Caco-2 (cell line): ENCODE measurements at regions of chr10 and their contacts with region 1.

Region 1: DNA sequence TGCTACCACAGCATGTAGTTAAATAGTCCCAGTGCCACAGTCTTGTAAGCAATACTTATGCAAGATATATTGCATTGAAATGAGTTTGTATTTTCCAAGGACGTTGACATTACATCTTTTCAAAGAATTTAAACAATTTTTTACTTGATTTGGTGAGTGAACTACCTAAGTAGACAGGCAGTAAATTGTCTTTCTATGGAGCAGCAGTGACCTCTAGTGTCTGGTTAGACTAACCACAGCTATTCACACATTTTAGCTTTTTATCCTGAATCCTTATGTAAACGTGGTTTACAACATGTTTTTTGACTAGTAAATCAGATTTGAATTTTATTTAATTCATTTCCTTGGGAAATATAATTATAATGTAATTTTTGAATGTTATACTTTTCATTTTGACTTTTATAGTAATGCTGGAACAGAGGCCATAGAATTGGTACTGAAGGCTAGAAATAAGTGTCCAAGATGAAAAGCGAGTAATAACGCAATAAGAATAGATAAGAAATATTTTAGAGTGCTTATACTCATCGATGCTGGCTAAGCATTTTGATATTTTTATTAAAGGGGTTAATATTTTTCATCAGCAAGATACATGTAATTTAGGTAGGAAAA is 5.6 kb downstream of the LRRTM3 start:
- DNase-seq: peak in 1 of 2 experiments; percentile 64
- H3K4me3 ChIP-seq: no peak overlapping the region
- H3K4me3 Mint-ChIP-seq: no peak overlapping the region
- H3K27ac Mint-ChIP-seq: no peak overlapping the region
- H3K4me1 ChIP-seq: no peaks in the 10 kb centered on the region
- H3K4me1 Mint-ChIP-seq: no peaks in the 10 kb centered on the region
- H3K27me3 ChIP-seq: no peaks in the 10 kb centered on the region; the same call in 1 of the 2 replicates
- H3K27me3 Mint-ChIP-seq: peaks cover 24% of the 10 kb centered on the region
- CTCF ChIP-seq: peak; percentile 93 to 96

Region 2: GRCh38 chr10:65358565-65358964 is 1572.9 kb before region 1 on chr10:
- CTCF ChIA-PET with region 1: no interaction called
- POLR2A ChIA-PET with region 1: no interaction called
- intact Hi-C with region 1: loop called (anchors 1 kb)
- DNase-seq: peak; percentile 63 to 66
- H3K4me3 ChIP-seq: no peak overlapping the region
- H3K4me3 Mint-ChIP-seq: no peak overlapping the region
- H3K27ac Mint-ChIP-seq: no peak overlapping the region
- H3K4me1 ChIP-seq: no peaks in the 10 kb centered on the region
- H3K4me1 Mint-ChIP-seq: no peaks in the 10 kb centered on the region
- H3K27me3 ChIP-seq: no peaks in the 10 kb centered on the region
- H3K27me3 Mint-ChIP-seq: no peaks in the 10 kb centered on the region
- CTCF ChIP-seq: peak; percentile 84 to 93

Region 3: DNA sequence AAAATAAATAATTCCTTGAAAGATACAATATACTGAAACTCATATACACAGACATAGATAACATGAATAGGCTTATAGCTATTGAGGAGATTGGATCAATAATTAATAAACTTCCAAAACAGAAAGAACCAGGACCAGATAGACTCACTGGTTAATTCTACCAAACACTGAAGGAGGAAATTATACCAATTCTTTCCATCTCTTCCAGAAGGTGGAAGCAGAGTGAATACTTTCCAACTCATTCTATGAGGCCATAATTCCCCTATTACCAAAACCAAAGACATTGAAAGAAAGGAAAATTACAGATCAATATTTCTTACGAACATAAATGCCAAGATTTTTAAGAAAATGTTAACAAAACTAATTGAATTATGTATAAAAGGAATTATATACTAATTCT is 630.4 kb before region 1 on chr10:
- CTCF ChIA-PET with region 1: no interaction called
- POLR2A ChIA-PET with region 1: no interaction called
- intact Hi-C with region 1: loop called (anchors 2 kb)
- DNase-seq: no peak
- H3K4me3 ChIP-seq: no peak overlapping the region
- H3K4me3 Mint-ChIP-seq: no peak overlapping the region
- H3K27ac Mint-ChIP-seq: no peak overlapping the region
- H3K4me1 ChIP-seq: no peaks in the 10 kb centered on the region
- H3K4me1 Mint-ChIP-seq: peaks cover 5% of the 10 kb centered on the region
- H3K27me3 ChIP-seq: no peaks in the 10 kb centered on the region
- H3K27me3 Mint-ChIP-seq: no peaks in the 10 kb centered on the region
- CTCF ChIP-seq: no peak

Region 4: DNA sequence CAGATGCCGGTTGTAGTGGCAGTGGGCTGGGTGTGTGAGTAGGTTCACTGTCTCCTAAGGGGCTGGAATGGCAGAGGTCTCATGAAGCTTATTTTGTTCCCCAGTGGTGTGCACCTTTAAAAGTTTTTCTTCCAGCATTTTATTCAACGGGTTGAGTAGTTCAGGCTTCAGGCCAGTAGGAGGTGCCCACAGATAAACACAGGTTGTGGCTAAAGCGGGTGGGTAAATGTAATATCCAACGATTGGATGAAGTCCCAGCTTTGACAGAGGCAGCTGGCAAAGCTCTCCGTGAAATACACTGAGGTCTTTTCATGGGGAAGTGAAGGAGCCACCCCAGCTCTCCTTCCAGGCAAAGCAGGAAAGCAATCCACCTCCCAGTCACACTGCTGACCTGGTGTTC is 345.4 kb before region 1 on chr10:
- CTCF ChIA-PET with region 1: no interaction called
- POLR2A ChIA-PET with region 1: no interaction called
- intact Hi-C with region 1: loop called (anchors 1 kb)
- DNase-seq: peak in 1 of 2 experiments; percentile 21
- H3K4me3 ChIP-seq: no peak overlapping the region
- H3K4me3 Mint-ChIP-seq: no peak overlapping the region
- H3K27ac Mint-ChIP-seq: no peak overlapping the region
- H3K4me1 ChIP-seq: no peaks in the 10 kb centered on the region
- H3K4me1 Mint-ChIP-seq: no peaks in the 10 kb centered on the region
- H3K27me3 ChIP-seq: no peaks in the 10 kb centered on the region
- H3K27me3 Mint-ChIP-seq: no peaks in the 10 kb centered on the region
- CTCF ChIP-seq: peak; percentile 26 to 29

Region 5: GRCh38 chr10:66852811-66853210 is 78.6 kb before region 1 on chr10:
- CTCF ChIA-PET with region 1: no interaction called
- POLR2A ChIA-PET with region 1: no interaction called
- intact Hi-C with region 1: no loop called
- DNase-seq: no peak
- H3K4me3 ChIP-seq: no peak overlapping the region
- H3K4me3 Mint-ChIP-seq: no peak overlapping the region
- H3K27ac Mint-ChIP-seq: no peak overlapping the region
- H3K4me1 ChIP-seq: no peaks in the 10 kb centered on the region
- H3K4me1 Mint-ChIP-seq: no peaks in the 10 kb centered on the region
- H3K27me3 ChIP-seq: no peaks in the 10 kb centered on the region; the same call in 1 of the 2 replicates
- H3K27me3 Mint-ChIP-seq: peaks cover 3% of the 10 kb centered on the region
- CTCF ChIP-seq: no peak

Region 6: DNA sequence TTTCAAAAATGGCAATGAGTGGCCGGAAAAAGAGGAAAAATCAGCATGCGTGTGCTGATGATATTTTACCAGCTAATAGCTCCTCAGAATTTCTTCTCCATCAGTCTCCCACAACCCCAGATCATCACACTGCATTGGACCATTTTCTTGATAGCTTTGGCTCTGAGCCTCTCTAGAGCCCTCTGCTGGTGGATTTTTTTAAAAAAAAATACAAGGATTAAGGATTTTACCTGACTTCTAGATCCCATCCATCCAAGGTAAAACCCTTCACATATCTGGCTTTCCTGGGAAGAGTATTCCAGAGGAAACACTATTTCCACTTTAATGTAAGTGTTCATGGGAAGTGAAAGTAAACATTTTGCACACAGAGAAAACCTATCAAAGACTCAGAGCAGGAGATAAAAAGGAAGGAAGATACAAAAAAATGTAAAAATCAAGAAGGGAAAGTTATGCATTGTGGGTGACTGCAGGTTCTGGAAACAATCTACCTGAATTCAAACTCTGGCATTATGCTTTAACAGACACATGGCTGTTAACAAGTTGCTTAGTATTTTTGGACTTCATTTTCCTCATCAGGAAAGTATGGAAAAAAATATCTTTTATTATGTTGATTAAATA is 375.3 kb after region 1 on chr10:
- CTCF ChIA-PET with region 1: no interaction called
- POLR2A ChIA-PET with region 1: no interaction called
- intact Hi-C with region 1: loop called (anchors 5 kb)
- DNase-seq: peak in 1 of 2 experiments; percentile 69
- H3K4me3 ChIP-seq: no peak overlapping the region
- H3K4me3 Mint-ChIP-seq: no peak overlapping the region
- H3K27ac Mint-ChIP-seq: no peak overlapping the region
- H3K4me1 ChIP-seq: no peaks in the 10 kb centered on the region
- H3K4me1 Mint-ChIP-seq: no peaks in the 10 kb centered on the region
- H3K27me3 ChIP-seq: no peaks in the 10 kb centered on the region
- H3K27me3 Mint-ChIP-seq: no peaks in the 10 kb centered on the region
- CTCF ChIP-seq: peak; percentile 72 to 89